ENCODE measurements at regions of chr2 and their contacts with region 1.

Region 1: DNA sequence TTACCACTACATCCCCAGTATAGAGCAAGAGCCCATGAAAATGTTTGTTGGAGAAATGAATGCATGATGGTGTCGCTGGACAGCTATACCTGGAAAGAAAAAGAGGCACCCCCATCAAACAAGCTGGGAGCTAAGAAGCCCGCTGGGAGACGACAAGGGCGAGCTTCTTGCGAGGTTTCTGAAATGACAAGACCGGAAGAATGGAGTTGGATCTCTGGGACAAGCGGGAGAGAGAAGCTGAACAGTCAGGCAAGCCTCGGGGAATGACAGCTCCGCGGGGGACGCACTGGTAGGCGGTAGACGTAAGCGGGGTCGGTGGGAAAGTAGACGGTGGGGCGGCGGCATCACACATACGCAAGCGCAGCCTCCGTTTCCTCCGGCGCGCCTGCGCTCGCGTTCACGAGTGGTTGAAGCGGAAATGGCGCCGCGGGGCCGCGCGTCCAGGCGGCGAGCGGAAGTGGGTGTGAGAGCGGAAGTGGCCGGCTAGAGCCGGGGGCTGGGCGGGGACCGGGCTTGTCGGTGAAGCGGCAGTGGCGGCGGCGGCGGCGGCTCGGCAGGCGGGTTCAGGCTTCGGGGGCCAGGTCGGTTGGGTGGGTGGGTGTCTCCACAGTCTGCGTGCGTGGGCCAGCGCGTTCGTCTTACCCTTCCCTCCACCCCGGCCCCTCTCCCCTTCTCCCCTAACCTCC is at the start of gene ARPC2:
- DNase-seq: peak; percentile 96 to 97 (median 97)
- ATAC-seq: peak; percentile 92 to 98 (median 98)
- H3K4me3 ChIP-seq: peak within 1 kb of the TSS; percentile 62 to 99 (median 96)
- H3K27ac ChIP-seq: peak within 1 kb of the TSS; percentile 84 to 98 (median 96)
- H3K4me1 ChIP-seq: peaks cover 0 to 55% (median 39%) of the 10 kb centered on the region in 12 donors
- H3K27me3 ChIP-seq: no peaks in the 10 kb centered on the region
- CTCF ChIP-seq: peak in 1 of 12 donors; percentile 10
- POLR2A ChIP-seq: peak in 1 of 2 donors; percentile 85
- total RNA-seq, gene ARPC2: 126 to 278 (median 139) TPM

Region 2: DNA sequence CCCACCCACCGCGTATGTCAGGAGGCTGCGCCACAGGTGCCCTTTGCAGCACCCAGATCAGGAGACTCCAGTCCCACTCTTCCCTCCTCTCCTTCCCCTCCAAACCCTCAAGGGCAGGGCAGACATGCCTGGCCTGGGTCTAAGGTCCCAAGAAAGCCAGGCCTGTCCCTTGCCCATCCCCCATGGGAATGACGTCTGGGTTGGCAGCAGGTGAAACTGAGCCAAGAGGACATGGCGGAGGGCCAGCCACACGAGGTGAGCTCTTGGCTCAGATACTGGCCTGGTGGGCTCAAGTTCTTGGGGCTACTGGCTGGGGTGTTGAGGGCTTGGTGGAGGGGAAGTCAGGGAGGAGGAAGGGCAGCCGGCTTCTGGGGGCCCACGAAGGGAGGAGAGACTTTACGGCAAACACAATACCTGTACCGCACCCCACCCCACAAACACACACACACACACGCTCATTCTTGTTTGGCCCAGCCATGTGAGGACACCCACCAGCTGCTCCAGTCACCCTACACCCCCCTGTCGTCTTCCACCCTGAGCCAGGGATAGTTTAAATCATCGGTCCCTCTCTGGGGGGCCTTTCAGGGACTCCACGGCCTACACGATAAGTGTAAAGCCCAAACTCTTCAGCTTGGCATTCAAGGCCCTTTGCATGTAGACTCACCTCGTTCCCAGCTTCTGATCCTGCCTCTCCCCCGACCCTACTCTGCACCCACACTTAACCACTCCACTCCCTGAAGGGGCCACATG is 190.0 kb before region 1 on chr2:
- intact Hi-C with region 1: no loop called
- DNase-seq: peak; percentile 52 to 74 (median 68)
- ATAC-seq: peak in 3 of 4 donors; percentile 5 to 56 (median 15)
- H3K4me3 ChIP-seq: no peak overlapping the region
- H3K27ac ChIP-seq: peak overlapping the region in 7 of 12 donors; percentile 8 to 62 (median 48)
- H3K4me1 ChIP-seq: peaks cover 0 to 62% (median 24%) of the 10 kb centered on the region in 12 donors
- H3K27me3 ChIP-seq: no peaks in the 10 kb centered on the region
- CTCF ChIP-seq: no peak
- POLR2A ChIP-seq: no peak

Region 3: DNA sequence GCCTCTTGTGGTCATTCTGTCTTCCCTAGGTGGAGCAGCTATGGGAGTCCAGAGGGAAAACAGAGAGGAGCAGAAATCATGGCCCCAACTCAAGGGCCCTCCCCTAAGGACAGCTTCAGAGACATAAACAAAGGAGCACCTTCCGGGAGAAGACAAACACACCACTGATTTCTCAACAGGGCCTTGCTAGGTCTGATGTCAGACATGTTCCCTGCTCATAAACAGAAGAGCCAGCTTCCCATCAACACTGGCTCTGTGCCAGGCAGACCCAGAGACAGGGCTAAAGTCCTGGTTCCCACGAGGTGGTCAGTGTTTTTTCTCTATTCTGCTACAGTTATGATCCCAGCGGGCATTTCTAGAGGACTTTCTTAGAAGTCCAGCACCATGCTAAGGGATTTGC is 71.7 kb before region 1 on chr2:
- intact Hi-C with region 1: no loop called
- DNase-seq: peak in 1 of 5 donors; percentile 40
- ATAC-seq: peak in 2 of 4 donors; percentile 20 to 41
- H3K4me3 ChIP-seq: no peak overlapping the region
- H3K27ac ChIP-seq: no peak overlapping the region
- H3K4me1 ChIP-seq: no peaks in the 10 kb centered on the region
- H3K27me3 ChIP-seq: peaks cover 0 to 11% (median 0%) of the 10 kb centered on the region in 9 donors
- CTCF ChIP-seq: no peak
- POLR2A ChIP-seq: no peak

Region 4: GRCh38 chr2:218257390-218257981 is 40.7 kb after region 1 on chr2:
- intact Hi-C with region 1: loop called in 7 of 10 experiments (anchors 1 to 10 kb)
- DNase-seq: no peak
- ATAC-seq: peak in 1 of 4 donors; percentile 6
- H3K4me3 ChIP-seq: no peak overlapping the region
- H3K27ac ChIP-seq: peak overlapping the region in 7 of 12 donors; percentile 7 to 88 (median 49)
- H3K4me1 ChIP-seq: peaks cover 3 to 58% (median 45%) of the 10 kb centered on the region in 12 donors
- H3K27me3 ChIP-seq: no peaks in the 10 kb centered on the region
- CTCF ChIP-seq: peak; percentile 24 to 55 (median 38)
- POLR2A ChIP-seq: no peak

Region 5: GRCh38 chr2:218286570-218287459 is 70.0 kb after region 1 on chr2:
- intact Hi-C with region 1: loop called in 1 of 10 experiments (anchors 2 kb)
- DNase-seq: peak; percentile 88 to 96 (median 95)
- ATAC-seq: peak; percentile 83 to 89 (median 85)
- H3K4me3 ChIP-seq: peak overlapping the region; percentile 28 to 70 (median 53)
- H3K27ac ChIP-seq: peak overlapping the region; percentile 89 to 100 (median 96)
- H3K4me1 ChIP-seq: peaks cover 27 to 99% (median 92%) of the 10 kb centered on the region in 12 donors
- H3K27me3 ChIP-seq: no peaks in the 10 kb centered on the region
- CTCF ChIP-seq: no peak
- POLR2A ChIP-seq: peak in 1 of 2 donors; percentile 35

Region 6: GRCh38 chr2:218292048-218293014 is 75.5 kb after region 1 on chr2 and contains the start of gene TMBIM1:
- intact Hi-C with region 1: loop called in 1 of 10 experiments (anchors 2 kb)
- DNase-seq: peak; percentile 83 to 92 (median 87)
- ATAC-seq: peak; percentile 68 to 92 (median 86)
- H3K4me3 ChIP-seq: peak within 1 kb of the TSS; percentile 74 to 98 (median 90)
- H3K27ac ChIP-seq: peak within 1 kb of the TSS; percentile 90 to 100 (median 96)
- H3K4me1 ChIP-seq: peaks cover 2 to 71% (median 49%) of the 10 kb centered on the region in 12 donors
- H3K27me3 ChIP-seq: no peaks in the 10 kb centered on the region
- CTCF ChIP-seq: peak; percentile 63 to 99 (median 96)
- POLR2A ChIP-seq: peak; percentile 50 to 93
- total RNA-seq, gene TMBIM1: 89.1 to 173 (median 126) TPM

Region 7: GRCh38 chr2:218312267-218312756 is 95.5 kb after region 1 on chr2:
- intact Hi-C with region 1: no loop called
- DNase-seq: no peak
- ATAC-seq: no peak
- H3K4me3 ChIP-seq: no peak overlapping the region
- H3K27ac ChIP-seq: no peak overlapping the region
- H3K4me1 ChIP-seq: peaks cover 0 to 23% (median 0%) of the 10 kb centered on the region in 12 donors
- H3K27me3 ChIP-seq: no peaks in the 10 kb centered on the region
- CTCF ChIP-seq: no peak
- POLR2A ChIP-seq: no peak